T-cell (primary cell): ENCODE measurements at regions of chr9 and their contacts with region 1.

Region 1: DNA sequence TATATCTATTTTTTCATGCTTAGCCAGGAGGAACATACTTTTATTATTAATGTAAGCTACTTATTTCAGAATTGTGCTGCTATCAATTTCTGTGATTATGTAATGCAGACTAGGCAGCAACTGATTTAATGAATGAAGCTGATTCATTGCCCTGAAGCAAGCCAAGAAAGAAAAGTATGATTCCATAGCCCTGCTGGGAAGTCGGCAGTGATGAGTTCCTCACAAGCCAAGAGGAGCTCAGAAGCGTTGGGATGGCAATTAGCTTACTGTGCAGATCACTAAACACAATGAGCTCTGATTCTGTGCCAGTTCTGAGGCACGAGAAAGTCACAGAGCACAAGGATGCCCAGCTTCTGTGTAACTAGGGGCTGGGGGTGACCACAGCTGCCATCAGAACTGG is 254.3 kb upstream of the KLF9 start:
- DNase-seq: no peak
- ATAC-seq: no peak
- H3K4me3 ChIP-seq: no peak overlapping the region
- H3K4me3 Mint-ChIP-seq: no peak overlapping the region
- H3K27ac ChIP-seq: no peak overlapping the region
- H3K27ac Mint-ChIP-seq: no peak overlapping the region
- H3K4me1 ChIP-seq: no peaks in the 10 kb centered on the region
- H3K4me1 Mint-ChIP-seq: peaks cover 8 to 27% (median 16%) of the 10 kb centered on the region in 3 donors
- H3K27me3 ChIP-seq: no peaks in the 10 kb centered on the region
- H3K27me3 Mint-ChIP-seq: peaks cover 0 to 7% of the 10 kb centered on the region in 2 donors

Region 2: GRCh38 chr9:70679845-70680244 is 11.1 kb after region 1 on chr9:
- CTCF ChIA-PET with region 1: interaction called in 1 of 2 experiments, 14 read pairs
- POLR2A ChIA-PET with region 1: no interaction called
- DNase-seq: no peak
- ATAC-seq: no peak
- H3K4me3 ChIP-seq: no peak overlapping the region
- H3K4me3 Mint-ChIP-seq: no peak overlapping the region
- H3K27ac ChIP-seq: no peak overlapping the region
- H3K27ac Mint-ChIP-seq: no peak overlapping the region
- H3K4me1 ChIP-seq: no peaks in the 10 kb centered on the region
- H3K4me1 Mint-ChIP-seq: no peaks in the 10 kb centered on the region
- H3K27me3 ChIP-seq: no peaks in the 10 kb centered on the region
- H3K27me3 Mint-ChIP-seq: peaks cover 0 to 8% of the 10 kb centered on the region in 2 donors